Panc1 (cell line): ENCODE measurements at regions of chr1 and their contacts with region 1.

Region 1: DNA sequence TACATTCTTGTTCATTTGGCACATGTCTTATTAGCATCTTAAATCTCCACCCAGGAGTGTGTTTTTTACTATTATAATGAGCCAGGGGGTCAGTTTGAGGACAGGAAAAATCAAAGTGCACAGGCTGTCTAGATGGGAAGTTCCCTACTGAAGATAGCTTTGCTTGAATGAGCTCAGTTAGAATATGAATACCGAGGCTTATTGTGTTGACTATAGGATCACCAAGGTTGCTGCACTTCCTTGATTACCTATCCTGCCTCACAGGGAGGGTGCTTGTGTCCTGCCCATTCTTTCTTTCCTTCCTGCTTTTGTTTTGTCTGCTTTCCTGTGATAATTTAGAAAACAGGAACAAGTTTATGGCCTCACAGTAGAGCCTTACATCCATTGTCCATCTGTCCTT is 16.3 kb downstream of the PHGDH start:
- DNase-seq: no peak
- ATAC-seq: no peak
- H3K4me3 ChIP-seq: no peak overlapping the region
- H3K27ac ChIP-seq: no peak overlapping the region
- H3K4me1 ChIP-seq: no peaks in the 10 kb centered on the region
- H3K27me3 ChIP-seq: no peaks in the 10 kb centered on the region
- CTCF ChIP-seq: no peak

Region 2: DNA sequence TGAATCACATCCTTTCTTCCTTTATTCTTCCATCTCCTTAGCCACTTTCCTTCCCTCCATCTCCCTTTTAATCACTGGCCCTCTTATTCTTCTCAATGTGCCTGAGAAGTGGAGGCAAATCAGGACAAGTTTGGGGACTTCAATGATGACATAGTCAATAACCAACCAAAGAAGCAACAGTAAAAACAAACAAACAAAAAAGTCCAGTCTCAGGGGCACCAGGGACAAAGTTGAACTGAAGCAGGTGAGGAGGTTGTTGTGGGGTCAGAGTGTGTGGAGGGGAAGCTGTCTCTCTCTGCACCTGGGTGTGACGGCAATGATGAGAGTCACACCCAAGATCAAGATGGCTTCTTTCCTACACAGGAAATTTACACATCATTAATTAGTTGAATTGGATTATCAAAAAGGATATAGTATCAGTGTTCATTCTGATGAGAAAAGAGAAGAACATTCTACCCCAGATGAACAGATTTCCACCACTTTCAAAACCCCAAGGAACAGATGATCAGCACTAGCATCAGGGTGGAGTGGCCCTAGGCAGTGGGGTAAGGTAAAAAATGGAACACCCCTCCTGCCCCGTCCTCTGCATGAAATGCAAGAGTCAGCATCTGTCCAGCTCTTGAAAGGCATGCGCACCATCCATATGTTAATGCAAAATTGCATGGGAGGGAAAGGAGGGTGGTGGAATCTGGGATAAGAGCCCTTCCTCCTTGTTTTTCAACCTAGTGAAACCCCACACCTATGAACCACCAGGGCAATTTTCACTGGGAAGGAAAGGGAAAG is 280.5 kb before region 1 on chr1:
- CTCF ChIA-PET with region 1: no interaction called
- POLR2A ChIA-PET with region 1: interaction called, 10 read pairs
- in situ Hi-C with region 1: no loop called
- intact Hi-C with region 1: no loop called
- DNase-seq: no peak
- ATAC-seq: no peak
- H3K4me3 ChIP-seq: no peak overlapping the region
- H3K27ac ChIP-seq: no peak overlapping the region
- H3K4me1 ChIP-seq: no peaks in the 10 kb centered on the region
- H3K27me3 ChIP-seq: peaks cover 2% of the 10 kb centered on the region
- CTCF ChIP-seq: no peak

Region 3: GRCh38 chr1:119603695-119604094 is 124.3 kb before region 1 on chr1:
- CTCF ChIA-PET with region 1: no interaction called
- POLR2A ChIA-PET with region 1: interaction called, 11 read pairs
- in situ Hi-C with region 1: no loop called
- intact Hi-C with region 1: no loop called
- DNase-seq: no peak
- ATAC-seq: no peak
- H3K4me3 ChIP-seq: no peak overlapping the region
- H3K27ac ChIP-seq: no peak overlapping the region
- H3K4me1 ChIP-seq: no peaks in the 10 kb centered on the region
- H3K27me3 ChIP-seq: no peaks in the 10 kb centered on the region
- CTCF ChIP-seq: no peak

Region 4: DNA sequence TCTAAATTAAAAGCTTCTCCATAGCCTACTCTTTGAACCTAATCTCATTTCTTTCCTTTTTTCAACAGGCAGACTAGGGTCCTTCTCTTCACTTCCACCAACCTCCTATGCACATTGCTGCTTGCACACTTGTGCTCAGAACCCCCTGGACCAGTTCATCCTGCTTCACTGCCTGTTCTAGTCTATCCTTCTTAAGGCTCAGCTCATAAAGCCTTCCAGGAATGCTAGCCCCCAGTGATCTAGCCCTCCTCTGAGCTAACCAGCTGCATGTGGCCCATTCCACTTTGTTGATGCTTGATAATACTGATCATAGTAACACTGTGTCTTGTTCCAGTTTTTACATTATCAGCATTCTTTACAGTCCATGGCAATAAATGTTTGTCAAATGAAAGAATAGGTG is 39.2 kb before region 1 on chr1:
- CTCF ChIA-PET with region 1: no interaction called
- POLR2A ChIA-PET with region 1: no interaction called
- in situ Hi-C with region 1: no loop called
- intact Hi-C with region 1: no loop called
- DNase-seq: no peak
- ATAC-seq: no peak
- H3K4me3 ChIP-seq: no peak overlapping the region
- H3K27ac ChIP-seq: no peak overlapping the region
- H3K4me1 ChIP-seq: no peaks in the 10 kb centered on the region
- H3K27me3 ChIP-seq: peaks cover 5% of the 10 kb centered on the region
- CTCF ChIP-seq: no peak